OCI-LY7 (cell line): ENCODE measurements at regions of chr22 and their contacts with region 1.

Region 1: GRCh38 chr22:30423982-30424963 is 1.3 kb upstream of the MTFP1 start:
- DNase-seq: peak; percentile 100
- H3K4me3 ChIP-seq: peak overlapping the region; percentile 93
- H3K27ac ChIP-seq: peak overlapping the region; percentile 75
- H3K4me1 ChIP-seq: peaks cover 35% of the 10 kb centered on the region
- CTCF ChIP-seq: 0 out of 2 replicates have a peak, but pooled peaks have one; percentile 38

Region 2: DNA sequence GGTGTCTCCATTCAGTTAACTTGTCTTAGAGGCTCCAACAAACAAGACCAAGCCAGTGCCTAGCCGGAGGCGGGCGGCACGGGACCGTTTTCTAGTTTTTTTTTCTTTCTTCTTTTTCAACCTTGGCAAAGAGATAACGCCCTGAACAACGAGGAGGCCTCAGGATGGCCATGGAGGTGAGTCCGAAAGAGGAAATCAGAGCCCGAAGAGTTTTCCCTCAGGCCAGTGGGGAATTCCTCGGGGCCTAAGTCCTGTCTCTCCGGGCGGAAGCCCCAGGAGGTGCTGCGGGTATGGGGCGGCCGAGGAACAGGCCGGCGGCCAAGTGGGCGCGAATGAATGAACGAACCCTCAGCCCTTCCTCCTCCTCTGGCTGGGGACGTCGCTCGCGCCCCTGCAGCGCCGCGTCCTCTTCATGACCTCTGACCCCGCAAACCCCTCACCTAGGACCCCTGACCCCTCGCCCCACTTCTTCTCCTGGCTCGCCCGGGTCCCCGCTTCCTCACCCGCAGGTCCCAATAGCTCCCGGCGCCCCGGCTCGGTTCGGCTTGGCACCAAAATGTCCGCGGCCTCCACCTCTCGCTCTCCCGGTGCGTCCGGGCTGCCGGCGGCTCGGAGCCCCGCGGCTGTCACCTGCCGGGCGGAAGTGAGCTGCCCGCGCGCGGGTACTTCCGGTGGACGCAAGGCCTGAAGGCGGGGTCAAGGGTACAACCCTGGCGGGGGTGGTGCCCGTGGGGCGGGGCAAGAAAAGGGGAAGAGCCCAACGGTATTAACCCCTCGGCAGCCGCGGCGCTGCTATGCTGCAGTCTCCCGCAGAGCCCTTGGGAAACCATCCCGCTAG is 1036.1 kb before region 1 on chr22 and contains the start of gene AP1B1:
- CTCF ChIA-PET with region 1: no interaction called
- POLR2A ChIA-PET with region 1: no interaction called
- intact Hi-C with region 1: loop called (anchors 10 kb)
- DNase-seq: peak; percentile 99
- H3K4me3 ChIP-seq: peak within 1 kb of the TSS; percentile 88
- H3K27ac ChIP-seq: peak within 1 kb of the TSS; percentile 97
- H3K4me1 ChIP-seq: peaks cover 69% of the 10 kb centered on the region
- CTCF ChIP-seq: peak; percentile 17; the same call in 1 of the 2 replicates
- total RNA-seq, gene AP1B1: 84.6 and 111 TPM in 2 replicates

Region 3: DNA sequence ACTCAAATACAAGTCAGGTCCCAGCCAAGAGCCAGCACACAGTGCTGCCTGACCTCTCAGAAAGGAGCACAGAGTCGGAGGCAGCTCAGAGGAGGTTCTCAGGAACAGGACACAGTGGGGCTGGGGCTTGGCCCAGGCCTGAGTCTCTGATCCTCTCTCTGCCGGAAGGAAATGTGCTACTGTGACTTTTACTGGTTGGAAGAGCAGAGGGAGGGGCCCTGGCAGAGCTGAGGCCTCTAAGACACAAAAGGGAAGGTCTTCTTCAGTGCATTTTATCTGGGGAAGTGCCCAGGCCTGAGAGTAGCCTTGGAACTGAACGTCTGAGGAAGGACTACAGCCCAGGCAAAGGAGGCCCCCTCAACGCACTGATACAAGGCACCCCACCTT is 118.8 kb before region 1 on chr22:
- CTCF ChIA-PET with region 1: interaction called, 5 read pairs
- POLR2A ChIA-PET with region 1: interaction called, 7 read pairs
- intact Hi-C with region 1: loop called (anchors 1 kb)
- DNase-seq: peak; percentile 90
- H3K4me3 ChIP-seq: peak overlapping the region; percentile 61
- H3K27ac ChIP-seq: peak overlapping the region; percentile 94
- H3K4me1 ChIP-seq: peaks cover 96% of the 10 kb centered on the region
- CTCF ChIP-seq: no peak

Region 4: GRCh38 chr22:30413745-30414524 is 10.3 kb before region 1 on chr22:
- CTCF ChIA-PET with region 1: no interaction called
- POLR2A ChIA-PET with region 1: interaction called, 28 read pairs
- intact Hi-C with region 1: no loop called
- DNase-seq: no peak
- H3K4me3 ChIP-seq: no peak overlapping the region
- H3K27ac ChIP-seq: no peak overlapping the region
- H3K4me1 ChIP-seq: no peaks in the 10 kb centered on the region
- CTCF ChIP-seq: no peak

Region 5: GRCh38 chr22:30474683-30475424 is 50.6 kb after region 1 on chr22:
- CTCF ChIA-PET with region 1: no interaction called
- POLR2A ChIA-PET with region 1: no interaction called
- intact Hi-C with region 1: no loop called
- DNase-seq: no peak
- H3K4me3 ChIP-seq: no peak overlapping the region
- H3K27ac ChIP-seq: no peak overlapping the region
- H3K4me1 ChIP-seq: no peaks in the 10 kb centered on the region
- CTCF ChIP-seq: no peak